ENCODE measurements at regions of chr7 and their contacts with region 1.

Region 1: DNA sequence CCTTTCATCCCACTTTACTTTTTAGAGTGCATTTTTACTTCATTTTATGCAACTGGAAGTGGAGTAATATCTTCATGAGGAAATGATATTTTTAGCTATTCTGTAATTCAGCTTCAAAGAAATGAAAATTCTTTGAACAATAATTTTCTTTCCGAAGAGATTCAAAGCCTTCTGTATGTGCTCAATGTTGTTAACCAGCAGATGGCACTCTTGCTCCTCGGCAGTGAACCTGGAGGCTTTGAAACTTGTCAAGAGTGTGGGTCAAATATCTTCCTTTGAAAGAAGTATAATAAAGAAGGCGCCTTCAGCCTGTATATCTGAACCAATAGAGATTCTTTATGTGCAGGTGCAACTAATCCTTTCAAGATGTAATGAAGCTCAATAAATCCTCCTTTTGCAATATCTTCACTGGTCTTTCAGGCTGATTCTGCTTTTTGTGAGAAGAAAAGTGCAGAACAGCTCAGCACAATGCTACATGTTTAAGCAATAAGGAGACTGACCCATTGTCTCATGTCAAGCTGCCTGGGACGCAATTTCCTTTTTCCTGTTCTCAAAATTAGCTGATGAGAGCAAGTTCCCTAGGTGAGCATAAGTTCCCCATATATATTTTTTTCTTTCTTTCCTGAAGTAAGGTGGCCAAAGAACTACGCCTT is 258.4 kb downstream of the SEMA3A start:
- DNase-seq: peak; percentile 78
- H3K4me3 Mint-ChIP-seq: no peak overlapping the region
- H3K27ac Mint-ChIP-seq: no peak overlapping the region
- H3K4me1 Mint-ChIP-seq: peaks cover 5% of the 10 kb centered on the region
- H3K27me3 Mint-ChIP-seq: no peaks in the 10 kb centered on the region
- CTCF ChIP-seq: peak; percentile 75

Region 2: GRCh38 chr7:83695128-83695960 is 240.8 kb before region 1 on chr7:
- CTCF ChIA-PET with region 1: no interaction called
- POLR2A ChIA-PET with region 1: no interaction called
- intact Hi-C with region 1: no loop called
- DNase-seq: no peak
- H3K4me3 Mint-ChIP-seq: no peak overlapping the region
- H3K27ac Mint-ChIP-seq: no peak overlapping the region
- H3K4me1 Mint-ChIP-seq: no peaks in the 10 kb centered on the region
- H3K27me3 Mint-ChIP-seq: peaks cover 64% of the 10 kb centered on the region
- CTCF ChIP-seq: no peak

Region 3: GRCh38 chr7:83913174-83913573 is 23.0 kb before region 1 on chr7:
- CTCF ChIA-PET with region 1: no interaction called
- POLR2A ChIA-PET with region 1: no interaction called
- intact Hi-C with region 1: no loop called
- DNase-seq: no peak
- H3K4me3 Mint-ChIP-seq: no peak overlapping the region
- H3K27ac Mint-ChIP-seq: no peak overlapping the region
- H3K4me1 Mint-ChIP-seq: no peaks in the 10 kb centered on the region
- H3K27me3 Mint-ChIP-seq: peaks cover 32% of the 10 kb centered on the region
- CTCF ChIP-seq: no peak

Region 4: DNA sequence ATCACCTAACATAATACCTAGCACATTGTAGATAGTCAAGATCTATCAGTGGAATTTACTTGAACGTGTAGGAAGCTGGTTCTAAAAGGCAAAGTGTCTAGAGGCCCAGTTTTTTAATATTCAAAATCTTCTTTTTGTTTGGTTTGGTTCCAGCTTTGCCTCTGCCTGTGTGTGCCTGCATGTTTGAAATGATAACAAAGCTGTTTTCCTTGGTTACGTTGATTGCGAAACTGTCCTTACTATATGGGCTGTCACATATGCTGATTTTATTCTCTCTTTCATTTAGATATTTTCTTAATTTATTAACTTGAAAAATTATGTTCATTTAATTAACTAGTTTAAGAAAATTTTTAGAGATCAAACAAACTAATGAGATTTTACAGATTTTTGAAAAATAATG is 21.2 kb after region 1 on chr7:
- CTCF ChIA-PET with region 1: interaction called, 37 read pairs
- POLR2A ChIA-PET with region 1: interaction called, 3 read pairs
- intact Hi-C with region 1: no loop called
- DNase-seq: peak; percentile 30
- H3K4me3 Mint-ChIP-seq: no peak overlapping the region
- H3K27ac Mint-ChIP-seq: peak overlapping the region; percentile 22
- H3K4me1 Mint-ChIP-seq: peaks cover 5% of the 10 kb centered on the region
- H3K27me3 Mint-ChIP-seq: no peaks in the 10 kb centered on the region
- CTCF ChIP-seq: no peak

Region 5: DNA sequence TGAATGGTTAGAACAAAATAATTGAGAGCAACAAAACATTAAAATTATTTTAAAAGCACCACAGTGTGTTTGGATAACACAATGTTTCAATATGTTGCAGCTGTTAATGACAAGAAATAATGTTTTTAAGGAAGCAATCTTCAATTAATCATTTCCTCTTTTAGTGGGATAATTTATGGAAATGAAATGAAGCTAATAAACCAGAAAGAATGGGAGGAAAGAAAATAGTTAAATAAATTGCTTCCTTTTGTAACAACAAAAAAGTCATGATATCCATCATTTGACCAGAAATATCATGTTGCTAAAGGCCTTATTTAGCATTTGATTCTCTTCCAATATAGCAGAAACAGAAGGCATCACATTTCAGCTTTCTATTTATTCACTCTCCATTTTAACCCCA is 33.9 kb after region 1 on chr7:
- CTCF ChIA-PET with region 1: interaction called, 14 read pairs
- POLR2A ChIA-PET with region 1: no interaction called
- intact Hi-C with region 1: loop called (anchors 2 kb)
- DNase-seq: no peak
- H3K4me3 Mint-ChIP-seq: no peak overlapping the region
- H3K27ac Mint-ChIP-seq: no peak overlapping the region
- H3K4me1 Mint-ChIP-seq: no peaks in the 10 kb centered on the region
- H3K27me3 Mint-ChIP-seq: no peaks in the 10 kb centered on the region
- CTCF ChIP-seq: no peak

Region 6: GRCh38 chr7:84188786-84189405 is 252.7 kb after region 1 on chr7:
- CTCF ChIA-PET with region 1: interaction called, 13 read pairs
- POLR2A ChIA-PET with region 1: no interaction called
- intact Hi-C with region 1: loop called (anchors 2 kb)
- DNase-seq: peak; percentile 56
- H3K4me3 Mint-ChIP-seq: no peak overlapping the region
- H3K27ac Mint-ChIP-seq: no peak overlapping the region
- H3K4me1 Mint-ChIP-seq: peaks cover 16% of the 10 kb centered on the region
- H3K27me3 Mint-ChIP-seq: no peaks in the 10 kb centered on the region
- CTCF ChIP-seq: peak; percentile 32

Region 7: GRCh38 chr7:84455788-84456187 is 519.6 kb after region 1 on chr7:
- CTCF ChIA-PET with region 1: interaction called, 12 read pairs
- POLR2A ChIA-PET with region 1: no interaction called
- intact Hi-C with region 1: loop called (anchors 2 kb)
- DNase-seq: peak; percentile 20
- H3K4me3 Mint-ChIP-seq: no peak overlapping the region
- H3K27ac Mint-ChIP-seq: no peak overlapping the region
- H3K4me1 Mint-ChIP-seq: no peaks in the 10 kb centered on the region
- H3K27me3 Mint-ChIP-seq: no peaks in the 10 kb centered on the region
- CTCF ChIP-seq: no peak

Region 8: GRCh38 chr7:85023045-85023712 is 1087.0 kb after region 1 on chr7:
- CTCF ChIA-PET with region 1: interaction called, 324 read pairs
- POLR2A ChIA-PET with region 1: interaction called, 4 read pairs
- intact Hi-C with region 1: loop called (anchors 1 kb)
- DNase-seq: peak; percentile 71
- H3K4me3 Mint-ChIP-seq: no peak overlapping the region
- H3K27ac Mint-ChIP-seq: no peak overlapping the region
- H3K4me1 Mint-ChIP-seq: peaks cover 21% of the 10 kb centered on the region
- H3K27me3 Mint-ChIP-seq: no peaks in the 10 kb centered on the region
- CTCF ChIP-seq: peak; percentile 54

Region 9: GRCh38 chr7:85160223-85160622 is 1224.0 kb after region 1 on chr7:
- CTCF ChIA-PET with region 1: no interaction called
- POLR2A ChIA-PET with region 1: no interaction called
- intact Hi-C with region 1: no loop called
- DNase-seq: no peak
- H3K4me3 Mint-ChIP-seq: no peak overlapping the region
- H3K27ac Mint-ChIP-seq: no peak overlapping the region
- H3K4me1 Mint-ChIP-seq: peaks cover 5% of the 10 kb centered on the region
- H3K27me3 Mint-ChIP-seq: peaks cover 34% of the 10 kb centered on the region
- CTCF ChIP-seq: no peak

Region 10: DNA sequence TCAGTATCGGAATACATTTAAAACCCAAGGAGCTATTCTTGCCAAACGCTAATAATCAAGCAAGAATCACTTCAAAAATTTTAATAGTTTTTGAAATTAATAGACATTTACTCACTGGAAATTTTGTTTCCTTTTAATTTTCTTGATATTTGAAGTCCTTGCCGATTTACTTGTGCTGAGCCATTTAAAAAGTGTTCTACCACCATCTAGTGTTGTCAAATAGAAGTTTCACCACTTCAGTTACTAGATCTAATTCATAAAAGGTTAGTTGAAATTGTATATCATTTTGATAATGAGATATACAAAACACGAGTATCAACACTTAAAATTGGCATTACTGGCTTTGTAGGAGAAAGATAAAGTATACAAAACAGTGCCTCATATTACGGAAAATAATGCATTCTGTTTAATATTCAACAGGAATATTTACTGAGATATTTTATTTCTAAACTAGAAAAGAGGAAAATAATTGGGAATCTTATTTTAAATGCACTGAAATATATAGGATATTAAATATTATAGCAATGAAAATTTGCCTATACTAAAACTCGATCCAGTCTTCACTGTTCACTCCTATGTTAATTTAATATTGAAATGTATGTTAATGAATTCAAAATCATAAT is 1915.5 kb after region 1 on chr7:
- CTCF ChIA-PET with region 1: interaction called, 4 read pairs
- POLR2A ChIA-PET with region 1: no interaction called
- intact Hi-C with region 1: loop called (anchors 10 kb)
- DNase-seq: peak; percentile 17
- H3K4me3 Mint-ChIP-seq: no peak overlapping the region
- H3K27ac Mint-ChIP-seq: no peak overlapping the region
- H3K4me1 Mint-ChIP-seq: no peaks in the 10 kb centered on the region
- H3K27me3 Mint-ChIP-seq: peaks cover 80% of the 10 kb centered on the region
- CTCF ChIP-seq: peak; percentile 40